Colonic mucosa (tissue), 4 donors: ENCODE measurements at regions of chr3 and their contacts with region 1.

Region 1: GRCh38 chr3:4712143-4712542 is 219.0 kb downstream of the ITPR1 start:
- DNase-seq: peak; percentile 78
- H3K4me3 ChIP-seq: no peak overlapping the region
- H3K27ac ChIP-seq: no peak overlapping the region
- H3K4me1 ChIP-seq: peaks cover 6% of the 10 kb centered on the region
- H3K27me3 ChIP-seq: no peaks in the 10 kb centered on the region
- CTCF ChIP-seq: no peak

Region 2: GRCh38 chr3:4656059-4656458 is 56.1 kb before region 1 on chr3:
- intact Hi-C with region 1: loop called (anchors 2 kb)
- DNase-seq: peak; percentile 43
- H3K4me3 ChIP-seq: no peak overlapping the region
- H3K27ac ChIP-seq: no peak overlapping the region
- H3K4me1 ChIP-seq: no peaks in the 10 kb centered on the region
- H3K27me3 ChIP-seq: no peaks in the 10 kb centered on the region
- CTCF ChIP-seq: peak; percentile 62

Region 3: GRCh38 chr3:4850211-4850927 is 138.2 kb after region 1 on chr3:
- intact Hi-C with region 1: no loop called
- DNase-seq: no peak
- H3K4me3 ChIP-seq: no peak overlapping the region
- H3K27ac ChIP-seq: no peak overlapping the region
- H3K4me1 ChIP-seq: no peaks in the 10 kb centered on the region
- H3K27me3 ChIP-seq: no peaks in the 10 kb centered on the region
- CTCF ChIP-seq: no peak

Region 4: GRCh38 chr3:5026331-5027218 is 314.4 kb after region 1 on chr3:
- intact Hi-C with region 1: loop called (anchors 5 kb)
- DNase-seq: peak; percentile 90
- H3K4me3 ChIP-seq: peak overlapping the region; percentile 41
- H3K27ac ChIP-seq: peak overlapping the region; percentile 18
- H3K4me1 ChIP-seq: no peaks in the 10 kb centered on the region
- H3K27me3 ChIP-seq: no peaks in the 10 kb centered on the region
- CTCF ChIP-seq: peak; percentile 37

Region 5: DNA sequence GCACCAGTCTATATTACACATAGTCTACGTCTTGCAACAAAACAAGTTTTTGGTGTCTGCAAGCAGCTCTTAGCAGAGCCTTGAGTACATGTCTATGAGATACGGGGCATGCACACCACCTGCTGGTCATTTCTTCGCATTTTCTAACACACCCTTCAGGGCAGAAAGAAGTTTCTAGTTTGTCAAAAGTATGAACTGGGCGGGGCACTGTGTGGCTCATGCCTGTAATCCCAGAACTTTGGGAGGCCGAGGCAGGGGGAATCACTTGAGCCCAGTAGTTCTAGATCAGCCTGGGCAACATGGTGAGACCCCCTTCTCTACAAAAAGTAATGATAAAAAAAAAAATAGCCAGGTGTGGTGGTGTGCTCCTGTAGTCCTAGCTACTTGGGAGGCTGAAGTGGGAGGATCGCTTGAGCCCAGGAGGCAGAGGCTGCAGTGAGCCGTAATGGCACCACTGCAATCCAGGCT is 345.7 kb after region 1 on chr3:
- intact Hi-C with region 1: loop called (anchors 2 kb)
- DNase-seq: peak; percentile 86
- H3K4me3 ChIP-seq: no peak overlapping the region
- H3K27ac ChIP-seq: no peak overlapping the region
- H3K4me1 ChIP-seq: no peaks in the 10 kb centered on the region
- H3K27me3 ChIP-seq: no peaks in the 10 kb centered on the region
- CTCF ChIP-seq: peak; percentile 64